ENCODE measurements at regions of chr15 and their contacts with region 1.

Region 1: DNA sequence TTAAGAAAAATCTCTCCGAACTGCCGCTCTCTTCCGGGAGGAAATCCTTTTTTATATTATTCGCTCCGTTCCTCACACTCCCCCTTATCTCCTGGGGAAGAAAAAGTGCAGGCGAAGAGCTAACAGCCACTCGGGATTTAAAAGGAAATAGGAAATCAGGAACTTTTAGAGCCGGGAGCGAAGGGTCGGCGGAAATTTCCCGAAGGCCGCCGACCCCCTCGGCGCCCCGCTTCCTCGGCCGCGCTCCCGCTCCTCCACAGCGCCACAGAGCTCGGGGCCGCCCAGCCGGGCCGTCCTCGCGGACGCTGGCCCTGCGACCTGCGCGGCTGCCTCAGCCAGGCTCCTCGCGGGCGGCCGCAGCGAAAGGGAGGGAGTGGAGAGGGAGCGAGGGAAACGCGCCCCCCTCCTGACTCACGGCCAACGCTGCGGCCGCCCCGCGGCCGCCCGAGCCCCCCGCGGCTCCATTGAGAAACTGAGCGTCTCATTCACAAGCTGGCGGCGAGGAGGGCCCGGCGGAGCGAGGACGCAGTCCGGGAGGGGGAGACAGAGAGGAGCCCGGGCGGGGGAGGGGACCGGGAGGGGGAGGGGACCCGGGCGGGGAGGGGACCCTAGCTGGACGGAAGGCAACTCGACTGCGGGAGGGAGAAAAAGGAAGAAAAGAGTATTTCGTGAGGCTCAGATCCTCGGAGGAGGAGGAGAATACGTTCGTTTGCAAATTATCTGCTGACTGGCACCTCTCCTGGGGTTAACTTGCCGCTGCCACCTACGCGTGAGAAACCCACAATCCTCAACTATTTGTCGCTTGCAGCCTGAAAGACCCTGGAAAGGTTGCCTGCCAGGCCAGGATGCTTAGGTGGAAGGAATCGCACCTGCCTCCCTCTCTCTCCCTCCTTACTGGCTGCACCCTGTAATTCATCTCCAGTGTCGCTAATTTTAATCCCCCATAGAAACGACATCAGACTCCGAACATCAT is at the start of gene PTPN9:
- H3K4me3 Mint-ChIP-seq: peak within 1 kb of the TSS; percentile 92
- H3K27ac Mint-ChIP-seq: peak within 1 kb of the TSS; percentile 95
- H3K4me1 Mint-ChIP-seq: peaks cover 20% of the 10 kb centered on the region
- H3K27me3 Mint-ChIP-seq: no peaks in the 10 kb centered on the region

Region 2: DNA sequence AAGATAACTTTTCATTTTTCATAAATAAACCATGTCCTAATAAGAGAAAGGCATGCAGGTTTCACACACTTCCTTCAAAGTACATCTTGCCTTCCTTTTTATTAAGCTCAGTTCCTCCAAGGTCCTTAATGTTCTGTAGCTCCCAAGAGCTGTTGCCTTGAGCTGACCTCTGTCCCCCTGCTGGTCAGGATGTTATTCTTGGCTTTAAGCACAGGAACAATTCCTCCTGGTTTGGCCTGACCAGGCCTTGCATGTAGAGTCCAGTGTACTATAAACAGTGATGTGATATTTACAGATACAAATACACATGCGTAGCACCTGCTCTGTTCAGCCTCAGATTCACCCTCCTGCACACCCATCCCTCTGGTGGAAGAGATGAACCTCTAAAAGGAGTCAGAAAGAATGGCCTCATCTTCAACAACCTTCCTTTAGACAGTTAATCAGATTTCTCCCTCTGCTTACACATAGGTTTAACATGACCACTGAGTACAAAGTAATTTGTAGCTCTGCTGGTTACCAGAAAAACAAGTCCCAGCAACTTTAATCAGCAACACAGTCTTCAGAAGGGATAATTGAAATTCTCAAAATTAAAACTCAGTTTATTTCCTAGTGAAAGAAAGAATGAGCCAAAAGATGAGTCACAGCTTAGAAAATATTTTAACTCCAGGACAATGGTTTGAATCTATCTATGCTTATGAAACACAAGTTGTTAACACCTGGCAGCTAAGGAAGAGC is 46.7 kb before region 1 on chr15:
- intact Hi-C with region 1: loop called (anchors 5 kb)
- H3K4me3 Mint-ChIP-seq: no peak overlapping the region
- H3K27ac Mint-ChIP-seq: no peak overlapping the region
- H3K4me1 Mint-ChIP-seq: peaks cover 13% of the 10 kb centered on the region
- H3K27me3 Mint-ChIP-seq: no peaks in the 10 kb centered on the region

Region 3: GRCh38 chr15:75625542-75626347 is 46.5 kb after region 1 on chr15 and contains the start of gene SNUPN:
- intact Hi-C with region 1: loop called (anchors 5 kb)
- H3K4me3 Mint-ChIP-seq: peak within 1 kb of the TSS; percentile 99
- H3K27ac Mint-ChIP-seq: peak within 1 kb of the TSS; percentile 100
- H3K4me1 Mint-ChIP-seq: peaks cover 33% of the 10 kb centered on the region
- H3K27me3 Mint-ChIP-seq: no peaks in the 10 kb centered on the region

Region 4: DNA sequence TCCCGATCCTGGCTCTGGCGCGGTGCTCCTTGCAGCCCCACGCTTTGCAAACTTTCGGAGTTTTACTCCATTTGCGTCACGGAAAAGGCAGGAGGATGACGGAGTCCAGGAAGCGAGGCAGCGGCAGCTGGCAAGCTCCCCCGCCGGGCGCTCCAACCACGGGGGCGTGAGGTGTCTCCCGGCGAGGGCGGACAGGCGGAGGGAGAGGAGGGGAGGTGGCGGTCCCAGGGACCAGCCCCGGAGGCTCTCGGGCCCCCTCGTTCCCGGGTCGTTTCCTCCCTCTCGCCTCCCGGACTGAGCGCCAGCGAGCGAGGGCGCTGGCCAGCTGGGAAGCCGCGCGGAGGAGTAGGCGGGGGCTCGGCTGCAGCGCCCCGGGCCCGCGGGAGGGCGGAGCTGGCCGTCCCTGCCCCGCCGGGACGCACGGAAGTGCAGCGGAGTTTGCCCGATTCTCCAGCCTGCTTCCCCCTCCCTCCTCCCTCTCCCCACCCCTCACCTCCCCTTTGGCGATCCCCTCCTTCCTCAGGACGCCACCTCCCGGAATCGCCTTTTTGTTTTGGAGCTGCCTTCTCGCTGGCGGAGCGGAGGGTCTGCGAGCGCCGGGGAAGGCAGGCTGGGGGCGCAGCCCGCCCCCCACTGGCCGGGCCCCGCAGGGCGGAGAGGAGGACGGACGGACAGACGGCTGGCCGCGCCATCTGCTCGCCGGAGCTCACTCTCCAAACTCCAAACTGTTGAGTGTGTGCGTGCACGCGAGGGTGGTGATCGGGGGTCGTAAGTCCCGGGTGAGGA is 68.3 kb after region 1 on chr15 and contains the start of gene SNX33:
- intact Hi-C with region 1: loop called (anchors 5 kb)
- H3K4me3 Mint-ChIP-seq: peak within 1 kb of the TSS; percentile 92
- H3K27ac Mint-ChIP-seq: peak within 1 kb of the TSS; percentile 90
- H3K4me1 Mint-ChIP-seq: peaks cover 55% of the 10 kb centered on the region
- H3K27me3 Mint-ChIP-seq: peaks cover 12% of the 10 kb centered on the region

Measured in dendritic cell treated with granulocyte-macrophage colony-stimulating factor and Interleukin-4, amounts not matched to agents 40 ng/mL and 50 ng/mL, for 4 days (primary cell).